Panc1 (cell line): ENCODE measurements at regions of chr15 and their contacts with region 1.

Region 1: DNA sequence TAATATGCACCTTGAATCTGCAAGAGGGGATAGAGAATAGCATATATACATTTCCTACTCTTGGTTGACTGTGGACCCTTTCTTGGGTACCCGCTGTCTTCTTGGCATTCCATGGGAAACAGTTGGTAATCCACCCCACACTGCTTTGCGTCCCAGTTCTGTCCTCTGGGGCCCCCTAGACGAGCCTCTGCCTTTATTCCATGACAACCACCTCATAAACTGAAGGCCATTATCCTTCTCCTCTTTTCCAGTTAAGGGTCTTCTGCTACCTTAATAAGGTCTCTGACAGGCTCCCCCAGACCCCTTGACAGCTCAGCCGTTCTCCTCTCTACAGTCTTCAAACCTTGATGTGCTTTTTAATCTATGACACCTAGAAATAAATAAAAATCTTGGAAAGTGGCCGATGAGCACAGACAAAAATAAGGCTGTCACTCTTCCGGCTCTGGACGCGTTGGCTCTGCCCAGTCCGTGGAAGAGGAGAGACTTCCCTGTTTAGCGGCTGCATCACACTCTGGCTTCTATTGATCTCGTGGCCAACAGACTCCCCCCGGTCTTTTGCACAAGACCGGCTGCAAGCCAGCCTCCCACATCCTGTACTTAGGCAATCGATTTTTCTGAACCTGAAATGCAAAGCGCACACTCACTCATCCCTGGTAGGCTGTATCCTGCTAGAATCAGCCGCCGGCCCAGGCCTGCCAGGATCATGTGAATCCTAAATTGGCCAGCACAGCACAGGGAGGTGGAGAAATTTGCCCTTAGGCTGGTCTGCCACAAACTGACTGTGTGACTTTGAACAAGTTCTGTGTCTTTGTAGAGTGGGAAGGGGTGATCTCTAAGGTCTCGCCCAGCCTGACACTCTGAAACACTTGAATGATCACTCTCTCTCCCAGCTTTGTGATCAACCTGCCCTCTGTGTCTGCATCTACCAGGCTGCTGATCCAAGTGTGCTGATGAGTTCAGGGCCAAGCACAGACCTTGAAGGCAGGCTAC is 251.2 kb upstream of the TLE3 start:
- DNase-seq: no peak
- ATAC-seq: peak; percentile 52; the same call in 1 of the 2 replicates
- H3K4me3 ChIP-seq: no peak overlapping the region
- H3K27ac ChIP-seq: peak overlapping the region; percentile 34; the same call in 1 of the 2 replicates
- H3K4me1 ChIP-seq: peaks cover 7% of the 10 kb centered on the region; the same call in 1 of the 2 replicates
- H3K27me3 ChIP-seq: no peaks in the 10 kb centered on the region
- CTCF ChIP-seq: no peak

Region 2: GRCh38 chr15:70166506-70167087 is 182.3 kb before region 1 on chr15:
- CTCF ChIA-PET with region 1: no interaction called
- POLR2A ChIA-PET with region 1: interaction called, 11 read pairs
- in situ Hi-C with region 1: no loop called
- intact Hi-C with region 1: no loop called
- DNase-seq: no peak
- ATAC-seq: no peak
- H3K4me3 ChIP-seq: no peak overlapping the region
- H3K27ac ChIP-seq: no peak overlapping the region
- H3K4me1 ChIP-seq: no peaks in the 10 kb centered on the region
- H3K27me3 ChIP-seq: no peaks in the 10 kb centered on the region
- CTCF ChIP-seq: no peak

Region 3: DNA sequence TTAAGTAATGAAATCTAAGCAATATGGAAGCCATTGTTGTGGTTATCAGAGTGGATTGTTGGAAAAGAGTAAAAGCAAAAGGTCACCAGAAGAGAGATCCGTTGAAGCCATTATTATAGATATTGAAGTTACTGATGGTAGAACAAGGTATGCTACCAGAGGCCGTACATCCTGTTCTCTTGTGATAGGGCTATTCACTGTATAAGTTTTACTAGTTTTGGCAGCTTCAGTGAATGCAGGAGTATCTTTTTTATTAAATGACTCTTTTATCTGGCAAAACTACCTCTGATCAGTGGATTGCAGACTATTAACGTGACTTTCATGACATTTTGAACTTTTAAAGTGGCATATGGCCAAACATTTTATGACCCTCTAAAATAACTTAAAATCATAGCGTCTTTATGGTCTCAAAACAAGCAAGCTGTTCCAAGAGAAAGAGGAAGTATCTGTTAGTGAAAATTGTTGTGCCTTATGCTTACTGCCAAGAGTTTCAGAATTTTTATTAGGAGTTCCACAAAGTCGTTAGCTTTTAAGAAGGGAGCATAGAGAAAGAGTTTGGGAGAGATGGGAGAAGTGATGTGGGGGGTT is 646.6 kb after region 1 on chr15:
- CTCF ChIA-PET with region 1: no interaction called
- POLR2A ChIA-PET with region 1: no interaction called
- in situ Hi-C with region 1: no loop called
- intact Hi-C with region 1: no loop called
- DNase-seq: no peak
- ATAC-seq: no peak
- H3K4me3 ChIP-seq: no peak overlapping the region
- H3K27ac ChIP-seq: no peak overlapping the region
- H3K4me1 ChIP-seq: no peaks in the 10 kb centered on the region
- H3K27me3 ChIP-seq: no peaks in the 10 kb centered on the region
- CTCF ChIP-seq: no peak